A549 (cell line): ENCODE measurements at regions of chr19 and their contacts with region 1.

Region 1: GRCh38 chr19:33373701-33374421 is at the start of gene CEBPG:
- DNase-seq: peak in 1 of 2 experiments; percentile 93
- ATAC-seq: peak; percentile 29 to 75
- H3K4me3 ChIP-seq: peak within 1 kb of the TSS; percentile 65
- H3K27ac ChIP-seq: peak within 1 kb of the TSS; percentile 92 to 95
- H3K4me1 ChIP-seq: peaks cover 37% of the 10 kb centered on the region
- CTCF ChIP-seq: peak; percentile 43
- EP300 ChIP-seq: peak in 1 of 2 experiments; percentile 67; a peak in 2 of 5 replicates
- POLR2A ChIP-seq: peak; percentile 73
- RAD21 ChIP-seq: no peak
- polyA plus RNA-seq, gene CEBPG: 104 and 138 TPM in 2 replicates

Region 2: GRCh38 chr19:33176670-33177416 is 197.0 kb before region 1 on chr19:
- CTCF ChIA-PET with region 1: interaction called, 4 read pairs
- POLR2A ChIA-PET with region 1: interaction called, 25 read pairs
- DNase-seq: peak; percentile 100
- ATAC-seq: peak; percentile 84 to 94
- H3K4me3 ChIP-seq: peak overlapping the region; percentile 65
- H3K27ac ChIP-seq: peak overlapping the region; percentile 89 to 91
- H3K4me1 ChIP-seq: peaks cover 19% of the 10 kb centered on the region
- CTCF ChIP-seq: no peak
- EP300 ChIP-seq: no peak
- POLR2A ChIP-seq: peak; percentile 100
- RAD21 ChIP-seq: 0 out of 5 replicates have a peak, but pooled peaks of 1 of the 2 experiments have one; percentile 16

Region 3: GRCh38 chr19:33316541-33317264 is 57.2 kb before region 1 on chr19:
- CTCF ChIA-PET with region 1: interaction called, 9 read pairs
- POLR2A ChIA-PET with region 1: interaction called, 16 read pairs
- DNase-seq: peak in 1 of 2 experiments; percentile 64
- ATAC-seq: peak; percentile 88 to 92
- H3K4me3 ChIP-seq: no peak overlapping the region
- H3K27ac ChIP-seq: peak overlapping the region; percentile 39 to 68
- H3K4me1 ChIP-seq: peaks cover 23% of the 10 kb centered on the region
- CTCF ChIP-seq: no peak
- EP300 ChIP-seq: 0 out of 5 replicates have a peak, but pooled peaks of 1 of the 2 experiments have one; percentile 19
- POLR2A ChIP-seq: no peak
- RAD21 ChIP-seq: no peak; a peak in 1 of 5 replicates

Region 4: DNA sequence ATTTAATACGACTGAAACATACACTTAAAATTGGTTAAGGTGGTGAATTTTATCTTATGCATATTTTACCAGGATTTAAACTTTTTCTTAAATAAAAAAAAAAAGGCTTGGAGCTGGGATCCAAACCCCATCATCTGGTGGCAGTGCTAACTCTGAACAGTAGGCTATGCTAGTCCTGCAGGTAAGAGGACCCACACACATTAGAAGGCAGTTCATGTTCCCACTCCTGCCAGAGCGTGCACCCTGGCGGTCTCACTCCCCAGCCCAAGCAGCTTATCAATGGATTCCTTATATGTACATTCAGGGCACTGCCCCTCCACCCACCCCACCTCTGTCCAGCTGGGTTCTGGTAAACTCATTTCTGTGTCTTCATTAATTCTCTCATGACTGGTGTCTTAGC is 40.2 kb before region 1 on chr19:
- CTCF ChIA-PET with region 1: no interaction called
- POLR2A ChIA-PET with region 1: no interaction called
- DNase-seq: no peak
- ATAC-seq: peak; percentile 43 to 51; a peak in 1 of 6 replicates
- H3K4me3 ChIP-seq: no peak overlapping the region
- H3K27ac ChIP-seq: no peak overlapping the region
- H3K4me1 ChIP-seq: peaks cover 3% of the 10 kb centered on the region; the same call in 1 of the 3 replicates
- CTCF ChIP-seq: no peak
- EP300 ChIP-seq: no peak
- POLR2A ChIP-seq: no peak
- RAD21 ChIP-seq: no peak

Region 5: DNA sequence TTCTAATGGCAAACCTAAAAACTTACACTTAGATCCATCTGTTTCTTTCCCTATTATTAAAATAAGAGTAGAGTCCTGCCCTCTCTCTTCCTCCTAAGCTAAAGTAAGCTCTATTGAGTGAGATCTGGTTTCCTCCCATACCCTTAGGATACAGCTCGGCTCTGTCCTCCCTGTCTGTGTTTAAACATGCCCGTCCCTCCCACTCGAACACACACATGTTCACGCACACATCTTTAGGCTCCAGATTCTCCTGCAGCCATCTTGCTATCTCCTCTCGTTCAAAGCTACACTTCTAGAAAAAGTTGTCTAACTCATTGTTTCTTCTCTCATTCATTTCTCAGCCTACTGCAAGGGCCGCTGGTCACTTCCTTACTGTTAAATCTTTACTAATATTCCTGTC is 15.5 kb before region 1 on chr19:
- CTCF ChIA-PET with region 1: interaction called, 17 read pairs
- POLR2A ChIA-PET with region 1: interaction called, 19 read pairs
- DNase-seq: no peak
- ATAC-seq: no peak
- H3K4me3 ChIP-seq: no peak overlapping the region
- H3K27ac ChIP-seq: no peak overlapping the region
- H3K4me1 ChIP-seq: no peaks in the 10 kb centered on the region
- CTCF ChIP-seq: no peak
- EP300 ChIP-seq: no peak
- POLR2A ChIP-seq: no peak
- RAD21 ChIP-seq: no peak

Region 6: GRCh38 chr19:33394006-33394849 is 20.4 kb after region 1 on chr19:
- CTCF ChIA-PET with region 1: interaction called, 881 read pairs
- POLR2A ChIA-PET with region 1: interaction called, 14 read pairs
- DNase-seq: no peak
- ATAC-seq: peak; percentile 5 to 7; a peak in 2 of 6 replicates
- H3K4me3 ChIP-seq: no peak overlapping the region
- H3K27ac ChIP-seq: peak overlapping the region in 1 of 2 experiments; percentile 47; a peak in 3 of 6 replicates
- H3K4me1 ChIP-seq: peaks cover 30% of the 10 kb centered on the region
- CTCF ChIP-seq: no peak
- EP300 ChIP-seq: no peak
- POLR2A ChIP-seq: no peak
- RAD21 ChIP-seq: no peak